ENCODE measurements at regions of chr5 and their contacts with region 1.

Region 1: GRCh38 chr5:171336521-171337209 is 27.6 kb downstream of the TLX3 start:
- DNase-seq: peak in 5 of 10 donors; percentile 20 to 80 (median 50)
- H3K4me3 ChIP-seq: peak overlapping the region in 57 of 59 donors; percentile 24 to 69 (median 48)
- H3K27ac ChIP-seq: peak overlapping the region in 2 of 59 donors; percentile 16 to 85
- H3K27me3 ChIP-seq: peaks cover 0 to 75% (median 18%) of the 10 kb centered on the region in 45 donors
- CTCF ChIP-seq: peak in 52 of 56 donors; percentile 31 to 75 (median 56)

Region 2: GRCh38 chr5:170638454-170639220 is 698.0 kb before region 1 on chr5:
- intact Hi-C with region 1: loop called in 1 of 2 experiments (anchors 10 kb)
- DNase-seq: peak in 9 of 10 donors; percentile 45 to 86 (median 67)
- H3K4me3 ChIP-seq: no peak overlapping the region
- H3K27ac ChIP-seq: no peak overlapping the region
- H3K27me3 ChIP-seq: peaks cover 0 to 18% (median 0%) of the 10 kb centered on the region in 45 donors
- CTCF ChIP-seq: peak; percentile 62 to 92 (median 82)

Region 3: DNA sequence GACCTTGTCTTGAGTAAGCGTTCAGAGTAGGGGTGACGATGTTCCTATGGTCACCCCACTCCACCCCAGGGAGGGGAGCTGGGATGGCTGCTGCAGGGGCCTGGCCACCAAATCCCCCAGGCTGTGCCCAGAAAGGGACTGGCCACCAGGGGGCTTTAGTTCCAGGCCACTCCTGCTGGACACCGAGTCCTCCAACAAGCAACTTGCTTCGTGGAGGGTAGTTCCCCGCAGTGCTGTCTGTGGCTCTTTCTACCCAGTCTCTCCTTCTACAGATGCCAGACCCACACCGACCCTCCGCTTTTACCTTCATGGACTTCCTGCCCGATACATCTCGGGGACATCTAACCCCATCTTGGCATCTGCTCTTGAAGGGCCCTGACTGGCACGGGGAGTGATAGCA is 588.8 kb before region 1 on chr5:
- intact Hi-C with region 1: loop called (anchors 2 to 10 kb)
- DNase-seq: no peak
- H3K4me3 ChIP-seq: no peak overlapping the region
- H3K27ac ChIP-seq: no peak overlapping the region
- H3K27me3 ChIP-seq: peaks cover 0 to 50% (median 12%) of the 10 kb centered on the region in 45 donors
- CTCF ChIP-seq: peak in 36 of 56 donors; percentile 8 to 46 (median 27)

Region 4: GRCh38 chr5:170813231-170813630 is 523.4 kb before region 1 on chr5:
- intact Hi-C with region 1: loop called in 1 of 2 experiments (anchors 5 kb)
- DNase-seq: no peak
- H3K4me3 ChIP-seq: no peak overlapping the region
- H3K27ac ChIP-seq: no peak overlapping the region
- H3K27me3 ChIP-seq: peaks cover 0 to 9% (median 0%) of the 10 kb centered on the region in 45 donors
- CTCF ChIP-seq: no peak

Region 5: GRCh38 chr5:171207256-171207847 is 129.3 kb before region 1 on chr5:
- intact Hi-C with region 1: loop called in 1 of 2 experiments (anchors 5 kb)
- DNase-seq: no peak
- H3K4me3 ChIP-seq: no peak overlapping the region
- H3K27ac ChIP-seq: no peak overlapping the region
- H3K27me3 ChIP-seq: peaks cover 0 to 5% (median 0%) of the 10 kb centered on the region in 45 donors
- CTCF ChIP-seq: peak in 54 of 56 donors; percentile 11 to 67 (median 45)

Measured in dorsolateral prefrontal cortex (tissue), 120 donors.